ENCODE measurements at regions of chr15 and their contacts with region 1.

Region 1: GRCh38 chr15:48285329-48286214 is 45.7 kb upstream of the DUT start:
- DNase-seq: peak; percentile 76
- H3K4me3 ChIP-seq: peak overlapping the region; percentile 35
- H3K27ac ChIP-seq: no peak overlapping the region
- H3K4me1 ChIP-seq: peaks cover 4% of the 10 kb centered on the region
- CTCF ChIP-seq: peak; percentile 89

Region 2: DNA sequence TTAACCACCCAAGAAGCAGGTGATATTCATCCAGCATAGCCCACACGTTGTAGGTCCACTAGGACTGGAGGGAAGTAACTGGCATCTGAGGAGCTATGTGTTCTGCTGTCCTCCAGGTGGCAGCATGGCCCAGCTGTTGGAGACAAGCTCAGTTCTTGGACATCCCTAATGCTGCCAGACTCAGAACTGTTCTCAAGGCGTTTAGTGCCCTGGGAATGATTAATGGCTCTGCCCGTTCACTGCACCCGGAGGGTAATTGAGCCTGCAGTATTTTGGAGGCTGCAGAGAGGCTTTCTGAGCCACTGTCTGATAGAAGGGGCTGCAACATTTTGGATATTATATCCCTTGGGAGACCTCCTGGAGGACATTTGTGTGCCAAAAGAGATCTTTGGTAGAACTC is 1089.5 kb before region 1 on chr15:
- CTCF ChIA-PET with region 1: interaction called, 3 read pairs
- POLR2A ChIA-PET with region 1: no interaction called
- intact Hi-C with region 1: loop called (anchors 10 kb)
- DNase-seq: peak; percentile 63
- H3K4me3 ChIP-seq: no peak overlapping the region
- H3K27ac ChIP-seq: no peak overlapping the region
- H3K4me1 ChIP-seq: no peaks in the 10 kb centered on the region
- CTCF ChIP-seq: peak; percentile 77

Region 3: GRCh38 chr15:48592221-48592731 is 306.7 kb after region 1 on chr15:
- CTCF ChIA-PET with region 1: no interaction called
- POLR2A ChIA-PET with region 1: no interaction called
- intact Hi-C with region 1: no loop called
- DNase-seq: no peak
- H3K4me3 ChIP-seq: no peak overlapping the region
- H3K27ac ChIP-seq: no peak overlapping the region
- H3K4me1 ChIP-seq: no peaks in the 10 kb centered on the region
- CTCF ChIP-seq: no peak

Measured in OCI-LY7 (cell line).